ENCODE measurements at regions of chr5 and their contacts with region 1.

Region 1: GRCh38 chr5:154857530-154858296 is 714 bp upstream of the CNOT8 start:
- DNase-seq: peak; percentile 93 to 98
- ATAC-seq: peak; percentile 82 to 84
- H3K4me3 ChIP-seq: peak overlapping the region; percentile 74 to 98 (median 92)
- H3K27ac ChIP-seq: peak overlapping the region; percentile 95 to 97 (median 97)
- H3K4me1 ChIP-seq: peaks cover 33 to 35% of the 10 kb centered on the region in 2 donors
- H3K27me3 ChIP-seq: no peaks in the 10 kb centered on the region
- CTCF ChIP-seq: peak in 2 of 5 experiments; percentile 11 to 18
- POLR2A ChIP-seq: peak; percentile 64 to 83

Region 2: DNA sequence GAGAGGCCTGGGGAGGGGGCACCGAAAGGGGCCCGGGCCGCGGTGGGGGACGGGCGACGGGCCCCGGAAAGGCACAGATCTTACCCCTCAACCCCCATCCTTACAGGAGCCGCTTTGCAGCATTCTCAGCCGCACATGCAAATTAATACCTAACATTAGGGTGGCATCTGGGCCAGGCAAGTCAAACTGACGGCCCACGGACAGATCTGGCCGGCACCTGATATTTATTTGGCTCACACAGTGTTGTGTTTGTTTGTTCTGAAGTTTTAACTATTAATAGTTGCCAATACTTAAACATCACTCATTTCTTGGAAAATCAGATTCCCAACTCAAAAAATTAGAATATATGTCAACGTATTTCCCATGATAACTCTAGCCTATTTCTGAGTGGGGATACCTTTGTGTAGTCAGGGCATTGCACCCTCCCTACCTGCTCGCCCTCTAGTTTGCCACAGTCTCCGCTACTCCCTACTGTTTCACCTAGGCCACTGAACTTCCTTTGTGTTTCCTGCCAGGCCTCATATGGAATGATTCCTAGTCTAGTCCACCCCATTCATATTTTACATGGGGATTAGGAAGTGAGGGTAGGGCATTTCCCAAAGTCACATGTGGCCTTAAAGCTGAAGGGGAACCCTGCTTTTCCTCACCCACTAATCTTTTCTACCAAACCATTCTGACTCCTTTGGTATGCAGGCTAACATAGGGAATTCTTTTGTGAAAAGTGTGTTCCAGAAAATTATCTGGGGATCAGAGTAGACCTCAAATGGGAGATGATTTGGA is 174.4 kb before region 1 on chr5:
- in situ Hi-C with region 1: no loop called
- intact Hi-C with region 1: loop called (anchors 1 kb)
- DNase-seq: no peak
- ATAC-seq: peak; percentile 32 to 42
- H3K4me3 ChIP-seq: peak overlapping the region; percentile 64 to 71 (median 68)
- H3K27ac ChIP-seq: peak overlapping the region; percentile 92 to 95 (median 95)
- H3K4me1 ChIP-seq: peaks cover 15 to 34% of the 10 kb centered on the region in 2 donors
- H3K27me3 ChIP-seq: no peaks in the 10 kb centered on the region
- CTCF ChIP-seq: no peak
- POLR2A ChIP-seq: no peak

Region 3: DNA sequence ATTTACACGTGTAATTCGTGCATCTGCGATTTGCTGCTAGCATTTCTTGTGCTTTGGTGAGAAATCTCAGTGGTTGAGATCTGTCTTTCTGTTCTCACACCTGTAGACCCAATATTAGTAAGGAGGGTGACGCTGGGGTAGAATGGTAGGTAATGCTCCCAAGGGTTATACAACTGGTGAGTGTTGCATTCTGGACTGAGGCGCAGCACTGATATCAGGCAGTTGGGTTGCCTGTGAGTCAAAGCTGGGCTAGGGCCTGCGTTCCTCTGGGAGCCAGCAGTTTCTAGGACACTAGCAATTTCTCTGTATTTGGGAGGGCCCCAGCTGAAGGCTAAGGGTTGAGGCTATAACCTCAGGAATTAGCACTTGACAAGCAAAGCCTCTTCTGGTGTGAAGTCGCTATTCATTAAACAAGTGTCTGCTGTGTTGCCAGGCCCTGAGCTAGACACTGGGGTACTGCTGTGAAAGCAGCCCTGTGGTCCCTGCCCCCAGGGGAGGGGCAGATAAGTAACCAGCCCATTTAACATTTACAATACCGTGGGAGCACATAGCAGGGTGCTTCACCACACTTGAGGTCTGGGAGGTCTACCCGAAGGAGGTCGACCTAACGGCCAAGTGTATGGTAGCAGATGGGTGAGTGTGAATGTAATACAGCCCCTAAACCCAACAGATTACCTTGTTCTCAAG is 73.8 kb before region 1 on chr5:
- in situ Hi-C with region 1: no loop called
- intact Hi-C with region 1: loop called (anchors 2 kb)
- DNase-seq: no peak
- ATAC-seq: no peak
- H3K4me3 ChIP-seq: no peak overlapping the region
- H3K27ac ChIP-seq: peak overlapping the region; percentile 75 to 81 (median 77)
- H3K4me1 ChIP-seq: peaks cover 86 to 98% of the 10 kb centered on the region in 2 donors
- H3K27me3 ChIP-seq: no peaks in the 10 kb centered on the region
- CTCF ChIP-seq: no peak
- POLR2A ChIP-seq: no peak

Region 4: DNA sequence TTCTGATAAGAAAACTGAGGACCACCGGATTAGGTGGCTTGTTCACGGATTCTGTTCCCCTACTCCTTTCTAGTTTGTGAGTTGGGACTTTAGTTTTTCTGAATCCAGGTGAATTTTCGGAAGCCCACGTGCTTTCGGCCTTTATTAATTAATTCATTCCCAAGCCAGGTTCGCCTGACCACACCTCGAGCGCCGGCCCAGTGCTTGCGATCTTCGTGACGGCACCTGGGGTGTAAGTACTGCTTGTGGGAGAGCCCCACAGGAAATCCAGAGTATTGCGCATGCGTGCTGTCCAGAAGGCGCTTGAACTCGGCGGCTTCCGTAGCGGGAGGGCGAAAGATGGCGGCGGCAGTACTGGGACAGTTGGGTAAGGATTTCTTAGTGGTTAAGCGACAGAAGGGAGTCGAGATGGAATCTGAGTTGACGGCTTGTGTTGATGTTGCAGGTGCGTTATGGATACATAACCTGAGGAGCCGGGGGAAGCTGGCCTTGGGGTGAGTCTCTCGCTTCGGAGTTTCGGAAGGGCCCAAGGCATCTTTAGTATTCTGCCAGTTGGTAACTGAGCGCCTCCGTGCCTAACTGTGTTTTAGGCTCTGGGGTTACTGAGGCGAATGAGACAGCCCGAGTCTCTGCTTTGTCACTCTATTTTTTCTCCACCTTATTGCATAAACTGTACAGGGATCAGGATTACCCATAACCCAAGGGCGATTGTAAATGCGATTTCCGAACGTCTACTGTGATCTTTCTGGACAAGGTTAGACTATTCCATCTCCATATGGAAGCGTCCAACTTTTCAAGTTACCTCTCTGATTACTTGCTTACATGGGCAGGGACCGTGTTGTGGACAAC is 83.3 kb after region 1 on chr5 and contains the start of gene MRPL22:
- in situ Hi-C with region 1: no loop called
- intact Hi-C with region 1: loop called (anchors 2 kb)
- DNase-seq: peak; percentile 84 to 91
- ATAC-seq: peak; percentile 85 to 89
- H3K4me3 ChIP-seq: peak within 1 kb of the TSS; percentile 67 to 80 (median 70)
- H3K27ac ChIP-seq: peak within 1 kb of the TSS; percentile 73 to 85 (median 77)
- H3K4me1 ChIP-seq: peaks cover 38 to 49% of the 10 kb centered on the region in 2 donors
- H3K27me3 ChIP-seq: no peaks in the 10 kb centered on the region
- CTCF ChIP-seq: peak in 4 of 5 experiments; percentile 14 to 25 (median 23)
- POLR2A ChIP-seq: peak; percentile 32 to 53
- total RNA-seq, gene MRPL22: 13.6 to 22.5 (median 21.0) TPM